ENCODE measurements at regions of chr11 and their contacts with region 1.

Region 1: GRCh38 chr11:96424693-96425092 is 34.9 kb downstream of the JRKL start:
- DNase-seq: no peak
- H3K4me3 ChIP-seq: no peak overlapping the region
- H3K27ac ChIP-seq: no peak overlapping the region
- H3K4me1 ChIP-seq: no peaks in the 10 kb centered on the region
- H3K27me3 ChIP-seq: peaks cover 0 to 11% (median 7%) of the 10 kb centered on the region in 3 donors
- CTCF ChIP-seq: no peak
- EP300 ChIP-seq: no peak
- POLR2A ChIP-seq: no peak

Region 2: GRCh38 chr11:95835768-95836488 is 588.8 kb before region 1 on chr11:
- intact Hi-C with region 1: loop called (anchors 10 kb)
- DNase-seq: peak; percentile 64 to 86
- H3K4me3 ChIP-seq: no peak overlapping the region
- H3K27ac ChIP-seq: peak overlapping the region in 2 of 5 donors; percentile 29 to 38
- H3K4me1 ChIP-seq: peaks cover 0 to 17% (median 6%) of the 10 kb centered on the region in 4 donors
- H3K27me3 ChIP-seq: no peaks in the 10 kb centered on the region
- CTCF ChIP-seq: peak in 5 of 7 experiments; percentile 52 to 90 (median 81)
- EP300 ChIP-seq: no peak
- POLR2A ChIP-seq: no peak

Measured in stomach (tissue), 19 donors.